Caco-2 (cell line): ENCODE measurements at regions of chr3 and their contacts with region 1.

Region 1: DNA sequence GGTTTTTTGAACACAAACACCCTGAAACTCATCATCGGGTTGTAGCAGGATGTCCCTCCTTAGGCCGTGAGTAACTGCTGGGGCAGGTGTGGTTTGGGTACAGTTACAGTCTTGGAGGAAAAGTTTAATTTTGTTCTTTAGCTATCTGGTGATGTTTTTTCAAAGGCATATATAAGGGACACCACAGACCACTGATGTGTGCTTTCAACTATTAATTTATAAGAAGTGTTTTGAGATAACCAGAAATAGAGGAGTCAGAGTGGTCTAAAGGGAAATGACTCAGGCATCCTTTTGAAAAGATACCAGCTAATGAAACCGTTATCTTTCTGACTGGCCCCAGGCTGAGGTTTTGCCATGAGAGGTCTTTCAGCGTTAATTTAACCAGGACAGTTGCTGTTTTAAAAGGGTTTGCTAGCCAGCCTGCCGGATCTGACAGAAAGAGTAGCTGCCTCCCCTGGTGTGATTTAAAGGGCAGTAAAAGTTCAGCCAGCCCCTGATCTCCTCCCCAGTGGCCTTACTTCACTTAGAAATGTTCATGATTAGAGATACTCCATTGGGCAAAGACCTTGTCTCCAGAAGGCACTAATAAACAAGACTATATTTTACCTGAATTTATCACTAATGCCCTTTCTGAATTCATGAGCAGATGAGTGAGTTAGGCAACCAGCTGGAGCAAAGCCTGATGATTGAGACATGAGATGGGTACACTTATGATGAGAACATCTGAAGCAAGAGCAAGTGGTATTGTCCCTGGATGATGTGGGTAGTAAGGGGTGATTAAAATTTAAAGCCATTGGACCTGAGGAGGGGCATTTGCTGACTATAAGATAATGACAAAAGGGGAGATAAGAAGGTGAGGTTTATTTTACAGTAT is 482.5 kb upstream of the TBL1XR1 start:
- DNase-seq: no peak
- H3K4me3 ChIP-seq: no peak overlapping the region
- H3K4me3 Mint-ChIP-seq: no peak overlapping the region
- H3K27ac Mint-ChIP-seq: no peak overlapping the region
- H3K4me1 ChIP-seq: peaks cover 38% of the 10 kb centered on the region
- H3K4me1 Mint-ChIP-seq: peaks cover 22% of the 10 kb centered on the region
- H3K27me3 ChIP-seq: no peaks in the 10 kb centered on the region
- H3K27me3 Mint-ChIP-seq: no peaks in the 10 kb centered on the region
- CTCF ChIP-seq: no peak

Region 2: DNA sequence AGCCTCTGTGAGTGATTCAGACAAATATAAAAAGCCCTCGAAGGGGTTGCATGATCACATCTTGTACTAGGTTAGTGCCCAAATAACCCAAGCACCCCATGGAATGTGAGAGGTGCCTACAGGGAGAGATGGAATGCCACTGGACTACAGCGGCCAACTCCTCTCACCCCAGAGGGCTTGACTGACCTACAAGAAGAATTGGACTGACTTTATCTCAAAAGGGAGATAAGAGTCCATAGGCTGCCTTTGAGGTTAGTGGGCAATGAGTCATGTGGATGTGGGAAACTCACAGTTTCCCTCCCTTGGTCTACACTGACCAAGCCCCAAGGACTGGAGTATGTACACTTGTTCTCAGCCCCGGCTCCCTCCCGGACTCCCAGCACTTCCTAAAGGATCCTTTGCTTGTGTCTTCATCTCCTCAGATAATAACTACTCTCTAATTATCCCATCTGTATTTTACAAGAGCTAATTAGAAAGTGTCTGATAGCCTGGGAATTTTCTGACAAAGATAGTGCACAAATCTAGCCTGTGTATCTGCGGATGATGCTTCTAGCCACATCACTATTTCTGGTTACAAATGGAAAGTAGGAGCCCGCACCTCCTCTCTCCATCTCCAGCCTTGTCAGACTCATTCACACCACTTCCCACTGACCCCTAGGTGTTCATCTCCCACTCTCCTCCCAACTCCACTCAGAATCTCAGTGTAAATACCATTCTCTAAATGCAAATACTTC is 65.2 kb after region 1 on chr3:
- CTCF ChIA-PET with region 1: no interaction called
- POLR2A ChIA-PET with region 1: no interaction called
- intact Hi-C with region 1: loop called (anchors 2 kb)
- DNase-seq: peak; percentile 30 to 62
- H3K4me3 ChIP-seq: no peak overlapping the region
- H3K4me3 Mint-ChIP-seq: no peak overlapping the region
- H3K27ac Mint-ChIP-seq: peak overlapping the region; percentile 19
- H3K4me1 ChIP-seq: peaks cover 23% of the 10 kb centered on the region
- H3K4me1 Mint-ChIP-seq: peaks cover 31% of the 10 kb centered on the region
- H3K27me3 ChIP-seq: no peaks in the 10 kb centered on the region
- H3K27me3 Mint-ChIP-seq: no peaks in the 10 kb centered on the region
- CTCF ChIP-seq: no peak

Region 3: DNA sequence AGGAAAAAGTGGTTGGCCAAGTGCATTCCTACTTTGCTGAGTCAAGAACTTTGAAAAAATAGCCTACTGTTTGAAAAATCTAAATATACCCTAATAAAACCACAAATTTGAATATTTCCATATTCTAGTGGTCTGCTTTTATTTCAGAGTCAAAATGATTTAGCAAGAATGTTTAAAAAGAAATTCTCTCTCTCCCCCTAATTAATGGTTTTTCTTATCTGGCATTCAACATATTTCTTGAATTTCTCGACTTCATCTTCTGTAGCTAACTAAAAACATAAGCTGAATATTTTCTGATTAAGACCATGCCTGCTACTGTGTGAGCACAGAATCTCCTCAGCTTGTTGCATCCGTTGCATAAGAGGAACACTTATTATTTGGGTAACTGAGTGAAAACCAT is 81.0 kb after region 1 on chr3:
- CTCF ChIA-PET with region 1: no interaction called
- POLR2A ChIA-PET with region 1: no interaction called
- intact Hi-C with region 1: no loop called
- DNase-seq: no peak
- H3K4me3 ChIP-seq: no peak overlapping the region
- H3K4me3 Mint-ChIP-seq: no peak overlapping the region
- H3K27ac Mint-ChIP-seq: no peak overlapping the region
- H3K4me1 ChIP-seq: no peaks in the 10 kb centered on the region
- H3K4me1 Mint-ChIP-seq: no peaks in the 10 kb centered on the region
- H3K27me3 ChIP-seq: no peaks in the 10 kb centered on the region
- H3K27me3 Mint-ChIP-seq: no peaks in the 10 kb centered on the region
- CTCF ChIP-seq: no peak